MCF 10A (cell line): ENCODE measurements at regions of chr3 and their contacts with region 1.

Region 1: DNA sequence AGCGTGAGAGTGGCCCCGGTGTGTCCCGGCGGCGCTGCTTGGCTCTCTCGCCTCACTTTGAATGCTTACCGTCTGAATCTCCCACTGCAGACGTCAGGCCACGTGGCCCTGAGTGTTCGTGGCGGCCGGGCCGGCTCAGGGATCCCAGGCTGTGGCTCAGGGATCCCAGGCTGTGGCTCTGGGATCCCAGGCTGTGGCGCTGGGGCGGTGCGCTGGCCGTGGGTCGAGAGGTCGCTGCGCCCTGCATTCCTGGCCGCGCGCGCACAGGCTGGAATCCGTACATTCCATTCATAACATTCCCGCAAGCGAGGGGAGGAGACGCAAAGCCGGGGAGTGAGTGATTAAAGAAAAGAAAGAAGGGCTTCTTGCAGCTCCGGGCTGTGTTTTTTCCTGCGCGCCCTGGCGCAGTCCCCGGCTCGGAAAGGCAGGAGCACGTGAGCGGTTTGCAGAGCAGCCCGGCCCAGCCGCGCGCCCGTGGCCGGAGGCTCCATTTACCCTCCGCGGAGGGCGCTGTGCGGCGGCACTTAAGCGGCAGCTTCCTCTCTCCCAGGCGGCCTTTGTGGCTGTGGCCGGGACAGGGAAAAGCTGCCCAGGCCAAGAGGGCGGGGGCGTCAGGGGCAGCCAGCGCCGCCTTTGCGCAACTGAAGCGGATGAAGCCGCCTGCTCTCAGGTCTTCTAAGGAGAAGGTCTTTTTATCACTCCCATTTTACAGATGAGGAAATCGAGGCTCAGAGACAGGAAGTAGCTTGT is 87.0 kb upstream of the ALDH1L1 start:
- DNase-seq: peak; percentile 81
- H3K4me3 Mint-ChIP-seq: peak overlapping the region; percentile 71
- H3K27ac Mint-ChIP-seq: peak overlapping the region; percentile 90
- H3K4me1 Mint-ChIP-seq: peaks cover 58% of the 10 kb centered on the region
- H3K27me3 Mint-ChIP-seq: no peaks in the 10 kb centered on the region
- CTCF ChIP-seq: no peak

Region 2: GRCh38 chr3:126284258-126284904 is 17.0 kb after region 1 on chr3:
- CTCF ChIA-PET with region 1: interaction called, 4 read pairs
- POLR2A ChIA-PET with region 1: interaction called, 13 read pairs
- intact Hi-C with region 1: no loop called
- DNase-seq: peak; percentile 85
- H3K4me3 Mint-ChIP-seq: no peak overlapping the region
- H3K27ac Mint-ChIP-seq: no peak overlapping the region
- H3K4me1 Mint-ChIP-seq: peaks cover 10% of the 10 kb centered on the region
- H3K27me3 Mint-ChIP-seq: no peaks in the 10 kb centered on the region
- CTCF ChIP-seq: no peak

Region 3: DNA sequence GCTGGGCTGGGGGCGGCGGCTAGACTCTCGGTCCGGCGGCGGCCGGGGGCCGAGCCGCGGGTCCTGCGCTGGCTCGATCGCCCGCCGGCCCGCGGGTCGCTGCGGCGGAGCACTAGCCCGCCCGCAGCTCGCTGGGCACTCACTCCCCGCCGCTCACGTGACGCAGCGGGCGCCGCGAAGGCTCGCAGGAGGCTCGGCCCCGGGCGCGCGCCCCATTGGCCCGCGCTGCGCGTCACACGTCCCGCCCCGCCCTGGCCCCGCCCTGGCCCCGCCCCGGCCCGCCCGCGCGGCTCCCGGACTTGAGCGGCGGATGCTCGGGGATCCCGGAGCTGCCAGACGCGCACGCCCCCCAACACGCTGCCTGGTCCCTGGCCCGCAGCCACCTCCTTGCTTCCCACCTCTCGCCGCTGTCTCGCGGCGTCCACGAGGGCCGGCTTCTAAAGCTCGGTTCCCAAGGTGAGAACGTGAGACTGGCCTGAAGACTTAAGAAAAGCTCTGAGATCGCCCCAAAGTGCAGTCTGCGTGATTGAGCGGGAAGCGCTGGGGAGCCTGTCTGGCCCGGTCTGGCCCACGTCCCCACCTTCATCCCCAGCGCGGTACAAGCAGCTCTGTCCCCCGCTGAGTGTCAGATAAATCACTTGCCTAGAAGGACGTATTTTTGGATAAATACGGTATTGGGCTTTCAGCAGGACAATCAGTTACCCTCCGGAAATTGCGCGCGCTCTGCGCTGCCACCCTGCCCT is 90.1 kb after region 1 on chr3 and contains the start of gene KLF15:
- CTCF ChIA-PET with region 1: no interaction called
- POLR2A ChIA-PET with region 1: interaction called, 9 read pairs
- intact Hi-C with region 1: loop called (anchors 2 kb)
- DNase-seq: peak; percentile 82
- H3K4me3 Mint-ChIP-seq: peak within 1 kb of the TSS; percentile 81
- H3K27ac Mint-ChIP-seq: peak within 1 kb of the TSS; percentile 69
- H3K4me1 Mint-ChIP-seq: peaks cover 4% of the 10 kb centered on the region
- H3K27me3 Mint-ChIP-seq: no peaks in the 10 kb centered on the region
- CTCF ChIP-seq: no peak
- total RNA-seq, gene KLF15: 5.3 and 8.3 TPM in 2 replicates

Region 4: GRCh38 chr3:126752303-126752842 is 485.0 kb after region 1 on chr3:
- CTCF ChIA-PET with region 1: no interaction called
- POLR2A ChIA-PET with region 1: no interaction called
- intact Hi-C with region 1: no loop called
- DNase-seq: peak; percentile 81
- H3K4me3 Mint-ChIP-seq: no peak overlapping the region
- H3K27ac Mint-ChIP-seq: peak overlapping the region; percentile 76
- H3K4me1 Mint-ChIP-seq: peaks cover 39% of the 10 kb centered on the region
- H3K27me3 Mint-ChIP-seq: no peaks in the 10 kb centered on the region
- CTCF ChIP-seq: peak; percentile 84

Region 5: DNA sequence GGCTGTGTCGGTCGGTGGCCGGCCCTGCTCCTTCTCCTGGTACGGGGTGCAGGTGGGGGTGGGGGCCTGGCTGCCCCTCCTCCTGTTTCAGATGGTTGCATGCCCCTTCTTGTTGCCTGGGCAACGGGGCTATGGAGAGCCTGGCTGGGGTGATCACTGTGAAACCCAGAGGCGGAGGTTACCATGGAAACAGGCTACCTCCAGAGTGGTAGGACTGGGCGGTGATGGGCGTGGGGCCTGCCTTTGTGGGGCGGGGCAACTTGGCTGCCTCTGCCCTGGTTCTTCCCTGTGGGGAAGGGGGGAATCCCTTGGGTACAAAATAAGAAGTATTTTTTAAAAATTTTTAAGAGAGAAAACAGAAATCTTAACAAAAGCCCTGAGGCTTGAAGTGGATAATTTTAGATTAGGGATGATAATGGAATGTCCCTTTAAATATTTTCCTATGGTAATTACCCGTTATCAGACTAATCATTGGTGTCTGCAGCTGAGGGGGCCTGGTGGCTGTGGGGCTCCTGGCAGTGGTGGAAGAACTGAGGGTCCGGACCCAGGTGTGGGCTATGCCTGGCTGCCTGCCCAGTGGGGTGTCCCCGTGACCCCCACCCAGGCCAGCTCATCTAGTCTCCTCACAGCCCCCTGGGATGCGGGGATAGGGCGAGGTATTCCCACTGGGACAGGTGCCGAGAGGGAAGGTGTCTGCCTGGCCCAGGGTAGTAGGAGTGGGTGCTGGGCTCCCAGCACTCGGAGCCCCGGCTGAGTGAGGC is 748.1 kb after region 1 on chr3:
- CTCF ChIA-PET with region 1: no interaction called
- POLR2A ChIA-PET with region 1: no interaction called
- intact Hi-C with region 1: no loop called
- DNase-seq: no peak
- H3K4me3 Mint-ChIP-seq: no peak overlapping the region
- H3K27ac Mint-ChIP-seq: no peak overlapping the region
- H3K4me1 Mint-ChIP-seq: peaks cover 16% of the 10 kb centered on the region
- H3K27me3 Mint-ChIP-seq: no peaks in the 10 kb centered on the region
- CTCF ChIP-seq: no peak